CD8-positive, alpha-beta T cell (primary cell): ENCODE measurements at regions of chr5 and their contacts with region 1.

Region 1: DNA sequence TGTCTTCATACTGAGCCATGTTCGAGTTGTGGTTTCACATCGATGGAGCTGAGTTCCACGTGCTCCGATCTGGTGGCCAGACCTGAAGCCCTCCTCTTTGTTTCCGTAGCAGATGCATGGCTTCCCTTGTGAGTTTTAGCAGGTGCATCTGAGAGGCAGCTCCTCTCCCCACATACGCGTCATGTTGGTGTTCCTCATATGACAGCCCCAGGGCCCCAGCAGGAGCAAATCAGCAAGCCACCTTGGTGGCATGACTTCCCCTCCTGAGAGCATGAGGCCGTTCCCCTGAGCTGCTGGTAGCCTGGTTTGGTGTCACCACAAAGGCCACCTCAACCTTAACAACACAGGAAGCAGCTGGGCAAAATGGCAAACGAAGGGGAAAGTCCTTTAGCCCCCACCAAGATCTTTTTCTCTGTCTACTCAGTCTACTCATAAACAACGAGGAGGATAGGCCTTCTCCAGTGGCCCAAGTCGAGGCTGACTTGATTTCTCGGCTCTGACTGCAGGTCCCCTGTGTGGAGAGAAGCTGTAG is 5.9 kb downstream of the CYFIP2 start:
- DNase-seq: peak; percentile 73 to 98 (median 88)
- ATAC-seq: peak; percentile 87
- H3K4me3 ChIP-seq: peak overlapping the region in 1 of 2 experiments; percentile 31
- H3K4me3 Mint-ChIP-seq: peak overlapping the region; percentile 56
- H3K27ac ChIP-seq: peak overlapping the region; percentile 79 to 82
- H3K27ac Mint-ChIP-seq: peak overlapping the region; percentile 98
- H3K4me1 ChIP-seq: peaks cover 89% of the 10 kb centered on the region
- H3K4me1 Mint-ChIP-seq: peaks cover 89% of the 10 kb centered on the region
- H3K27me3 ChIP-seq: no peaks in the 10 kb centered on the region
- H3K27me3 Mint-ChIP-seq: no peaks in the 10 kb centered on the region
- CTCF ChIP-seq: no peak

Region 2: DNA sequence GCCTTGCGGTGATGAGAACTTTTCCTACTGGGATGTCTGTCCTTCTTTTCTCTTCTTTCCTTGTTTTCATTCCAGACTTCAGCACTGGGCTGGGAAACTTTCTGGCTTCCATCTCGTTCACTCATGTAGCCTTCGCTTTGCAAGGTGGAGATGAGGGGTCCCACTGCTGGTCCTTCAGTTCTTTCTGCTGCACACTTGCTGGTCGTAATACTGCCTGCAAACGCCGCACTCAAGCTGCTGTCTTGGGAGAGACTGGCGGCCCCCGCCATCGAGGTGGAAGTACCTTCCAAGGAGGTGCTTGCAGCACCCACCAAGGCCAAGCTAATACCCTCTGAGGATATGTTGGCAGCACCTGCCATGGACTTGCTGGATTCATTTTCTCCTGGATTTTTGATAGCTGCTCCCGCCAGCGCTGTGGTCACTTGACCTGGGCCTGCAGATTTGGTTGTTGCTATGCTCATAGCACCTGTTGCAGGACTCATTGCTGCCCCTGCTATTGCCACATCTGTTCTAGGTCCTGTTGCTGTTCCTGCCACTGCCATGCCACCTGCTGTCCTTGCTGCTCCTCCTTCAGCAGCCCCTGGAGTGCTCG is 108.8 kb before region 1 on chr5:
- CTCF ChIA-PET with region 1: no interaction called
- POLR2A ChIA-PET with region 1: no interaction called
- intact Hi-C with region 1: no loop called
- DNase-seq: no peak
- ATAC-seq: no peak
- H3K4me3 ChIP-seq: no peak overlapping the region
- H3K4me3 Mint-ChIP-seq: no peak overlapping the region
- H3K27ac ChIP-seq: no peak overlapping the region
- H3K27ac Mint-ChIP-seq: no peak overlapping the region
- H3K4me1 ChIP-seq: peaks cover 39% of the 10 kb centered on the region
- H3K4me1 Mint-ChIP-seq: peaks cover 57% of the 10 kb centered on the region
- H3K27me3 ChIP-seq: no peaks in the 10 kb centered on the region
- H3K27me3 Mint-ChIP-seq: no peaks in the 10 kb centered on the region
- CTCF ChIP-seq: no peak

Region 3: DNA sequence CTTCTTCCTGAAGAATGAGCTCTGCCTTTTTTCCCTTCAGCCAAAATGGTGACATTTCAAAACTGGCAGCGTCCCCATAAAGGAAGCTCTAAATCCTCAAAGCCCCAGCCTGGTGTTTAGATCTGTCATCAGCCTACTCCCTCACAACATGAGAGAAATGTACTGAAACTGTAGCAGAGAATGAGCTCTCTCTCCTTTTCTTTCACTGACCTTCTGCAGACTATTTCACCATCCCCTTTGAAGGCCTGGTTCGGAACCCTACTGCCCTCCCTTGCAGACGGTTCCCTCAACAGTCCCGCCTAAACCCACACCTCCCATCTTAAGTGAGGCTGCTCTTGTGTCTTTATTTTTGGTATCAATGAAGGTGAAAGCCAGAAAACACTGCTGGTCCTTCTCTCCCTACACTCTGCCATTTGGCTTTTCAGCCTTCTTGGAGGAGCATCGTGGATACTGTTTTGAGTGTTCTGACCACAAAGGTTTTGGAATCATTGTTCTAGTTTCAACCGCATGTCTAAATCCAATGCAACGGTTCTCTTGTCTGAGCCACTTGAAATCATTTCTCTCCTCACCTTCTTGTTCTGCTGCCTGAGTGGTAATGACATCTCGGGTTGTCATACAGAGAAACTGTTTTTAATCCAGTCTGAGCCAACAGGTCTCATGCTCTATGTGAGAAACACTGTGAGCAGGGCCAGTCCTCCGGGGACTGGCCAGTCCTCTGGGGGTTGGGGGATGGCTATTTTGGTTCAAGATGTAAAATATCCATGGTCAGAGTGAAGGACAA is 52.1 kb before region 1 on chr5:
- CTCF ChIA-PET with region 1: interaction called, 4 read pairs
- POLR2A ChIA-PET with region 1: interaction called, 20 read pairs
- intact Hi-C with region 1: no loop called
- DNase-seq: no peak
- ATAC-seq: no peak
- H3K4me3 ChIP-seq: no peak overlapping the region
- H3K4me3 Mint-ChIP-seq: peak overlapping the region; percentile 40
- H3K27ac ChIP-seq: peak overlapping the region in 1 of 2 experiments; percentile 76
- H3K27ac Mint-ChIP-seq: peak overlapping the region; percentile 91
- H3K4me1 ChIP-seq: peaks cover 85% of the 10 kb centered on the region
- H3K4me1 Mint-ChIP-seq: peaks cover 87% of the 10 kb centered on the region
- H3K27me3 ChIP-seq: no peaks in the 10 kb centered on the region
- H3K27me3 Mint-ChIP-seq: no peaks in the 10 kb centered on the region
- CTCF ChIP-seq: no peak

Region 4: GRCh38 chr5:157253547-157253946 is 18.3 kb before region 1 on chr5:
- CTCF ChIA-PET with region 1: interaction called, 57 read pairs
- POLR2A ChIA-PET with region 1: interaction called, 44 read pairs
- intact Hi-C with region 1: no loop called
- DNase-seq: peak in 1 of 9 experiments; percentile 29
- ATAC-seq: no peak
- H3K4me3 ChIP-seq: no peak overlapping the region
- H3K4me3 Mint-ChIP-seq: peak overlapping the region; percentile 61
- H3K27ac ChIP-seq: peak overlapping the region; percentile 61 to 72
- H3K27ac Mint-ChIP-seq: peak overlapping the region; percentile 92
- H3K4me1 ChIP-seq: peaks cover 97% of the 10 kb centered on the region
- H3K4me1 Mint-ChIP-seq: peaks cover 93% of the 10 kb centered on the region
- H3K27me3 ChIP-seq: no peaks in the 10 kb centered on the region
- H3K27me3 Mint-ChIP-seq: no peaks in the 10 kb centered on the region
- CTCF ChIP-seq: peak; percentile 54

Region 5: GRCh38 chr5:157288405-157289163 is 16.8 kb after region 1 on chr5:
- CTCF ChIA-PET with region 1: interaction called, 26 read pairs
- POLR2A ChIA-PET with region 1: interaction called, 9 read pairs
- intact Hi-C with region 1: loop called in 1 of 2 experiments (anchors 1 kb)
- DNase-seq: peak in 1 of 9 experiments; percentile 43
- ATAC-seq: peak; percentile 69
- H3K4me3 ChIP-seq: no peak overlapping the region
- H3K4me3 Mint-ChIP-seq: peak overlapping the region; percentile 47
- H3K27ac ChIP-seq: peak overlapping the region; percentile 4 to 16
- H3K27ac Mint-ChIP-seq: peak overlapping the region; percentile 91
- H3K4me1 ChIP-seq: peaks cover 72% of the 10 kb centered on the region
- H3K4me1 Mint-ChIP-seq: peaks cover 72% of the 10 kb centered on the region
- H3K27me3 ChIP-seq: no peaks in the 10 kb centered on the region
- H3K27me3 Mint-ChIP-seq: no peaks in the 10 kb centered on the region
- CTCF ChIP-seq: no peak

Region 6: GRCh38 chr5:157312492-157312891 is 40.7 kb after region 1 on chr5:
- CTCF ChIA-PET with region 1: interaction called, 12 read pairs
- POLR2A ChIA-PET with region 1: interaction called, 5 read pairs
- intact Hi-C with region 1: no loop called
- DNase-seq: peak; percentile 24 to 87 (median 66)
- ATAC-seq: peak; percentile 95
- H3K4me3 ChIP-seq: no peak overlapping the region
- H3K4me3 Mint-ChIP-seq: no peak overlapping the region
- H3K27ac ChIP-seq: peak overlapping the region in 1 of 2 experiments; percentile 11
- H3K27ac Mint-ChIP-seq: peak overlapping the region; percentile 81
- H3K4me1 ChIP-seq: peaks cover 37% of the 10 kb centered on the region
- H3K4me1 Mint-ChIP-seq: peaks cover 38% of the 10 kb centered on the region
- H3K27me3 ChIP-seq: no peaks in the 10 kb centered on the region
- H3K27me3 Mint-ChIP-seq: no peaks in the 10 kb centered on the region
- CTCF ChIP-seq: peak; percentile 62

Region 7: DNA sequence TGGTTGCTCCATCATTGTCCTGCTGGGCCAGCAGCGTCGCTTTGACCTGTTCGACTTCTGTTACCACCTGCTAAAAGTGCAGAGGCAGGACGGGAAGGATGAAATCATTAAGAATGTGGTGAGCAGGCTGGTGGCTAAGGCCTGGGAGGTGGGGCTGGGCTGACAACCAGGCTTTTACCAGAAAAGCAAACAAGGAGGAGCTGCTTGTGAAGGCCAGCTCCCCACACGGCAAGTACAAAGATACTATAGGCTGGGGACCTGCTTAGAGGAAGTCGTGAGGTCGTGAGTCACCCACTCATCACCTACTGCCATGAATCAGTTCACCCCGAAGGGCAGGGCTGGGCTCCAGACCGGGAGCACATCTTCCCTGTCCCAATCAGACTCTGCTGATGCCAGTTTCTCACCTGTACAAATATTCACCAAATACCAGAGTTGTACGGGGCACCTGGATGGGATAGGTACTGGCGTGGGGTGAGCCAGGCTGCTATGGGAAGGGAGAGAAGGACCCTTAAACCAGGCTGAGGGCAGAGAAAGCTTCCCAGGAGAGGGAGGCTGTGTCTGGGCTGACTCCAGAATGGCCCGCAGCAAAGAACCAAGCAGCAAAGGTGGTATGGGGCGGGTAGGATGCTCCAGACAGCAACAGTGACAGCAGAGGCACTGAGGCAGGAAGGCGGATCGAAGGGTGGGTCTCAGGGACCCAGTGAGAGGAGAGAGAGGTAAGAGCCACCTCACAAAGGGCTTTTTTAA is 118.9 kb after region 1 on chr5:
- CTCF ChIA-PET with region 1: no interaction called
- POLR2A ChIA-PET with region 1: no interaction called
- intact Hi-C with region 1: no loop called
- DNase-seq: peak in 7 of 9 experiments; percentile 12 to 75 (median 47)
- ATAC-seq: peak; percentile 84
- H3K4me3 ChIP-seq: no peak overlapping the region
- H3K4me3 Mint-ChIP-seq: no peak overlapping the region
- H3K27ac ChIP-seq: peak overlapping the region in 1 of 2 experiments; percentile 70
- H3K27ac Mint-ChIP-seq: peak overlapping the region; percentile 91
- H3K4me1 ChIP-seq: no peaks in the 10 kb centered on the region
- H3K4me1 Mint-ChIP-seq: peaks cover 9% of the 10 kb centered on the region
- H3K27me3 ChIP-seq: no peaks in the 10 kb centered on the region
- H3K27me3 Mint-ChIP-seq: no peaks in the 10 kb centered on the region
- CTCF ChIP-seq: no peak